ENCODE measurements at regions of chr4 and their contacts with region 1.

Region 1: DNA sequence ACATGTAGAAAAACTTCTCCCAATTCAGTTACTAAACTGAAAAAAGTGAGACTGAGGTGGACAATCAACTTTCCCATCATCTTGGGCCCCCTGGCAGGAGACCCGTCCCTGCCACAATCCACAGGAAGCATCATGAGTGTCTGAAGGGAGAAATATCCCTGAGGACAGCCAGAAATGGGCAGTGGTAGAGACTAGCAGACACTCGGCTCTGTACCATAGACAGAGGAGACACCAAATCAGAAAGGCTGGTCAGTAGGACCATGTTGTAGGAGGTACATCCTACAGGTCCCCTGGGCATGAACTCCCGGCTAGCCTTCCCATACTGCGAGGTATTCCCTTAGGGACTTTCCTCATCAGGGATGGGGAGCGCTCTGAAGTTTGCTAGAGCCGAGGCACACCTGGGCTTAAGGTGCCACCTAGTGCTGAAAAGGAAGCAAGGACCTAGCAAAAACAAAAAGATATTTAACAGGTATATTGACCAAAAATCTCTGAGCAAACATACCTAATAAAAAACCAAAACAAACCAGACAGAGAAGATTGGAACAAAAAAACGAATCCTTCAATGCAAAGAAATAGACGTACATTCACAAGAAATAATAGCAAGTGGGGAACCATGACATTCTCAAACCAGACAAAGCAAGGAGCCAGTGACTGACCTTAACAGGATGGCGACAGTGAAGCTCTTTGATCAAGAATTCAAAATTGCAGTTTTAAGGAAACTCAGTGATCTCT is 55.6 kb downstream of the HAUS3 start:
- DNase-seq: peak; percentile 43 to 47
- H3K4me3 ChIP-seq: no peak overlapping the region
- H3K27ac ChIP-seq: no peak overlapping the region
- H3K4me1 ChIP-seq: no peaks in the 10 kb centered on the region
- H3K27me3 ChIP-seq: no peaks in the 10 kb centered on the region
- CTCF ChIP-seq: peak; percentile 85

Region 2: GRCh38 chr4:1748465-1748995 is 437.8 kb before region 1 on chr4:
- CTCF ChIA-PET with region 1: no interaction called
- POLR2A ChIA-PET with region 1: no interaction called
- intact Hi-C with region 1: loop called (anchors 1 kb)
- DNase-seq: peak in 1 of 2 experiments; percentile 84
- H3K4me3 ChIP-seq: no peak overlapping the region
- H3K27ac ChIP-seq: no peak overlapping the region
- H3K4me1 ChIP-seq: no peaks in the 10 kb centered on the region
- H3K27me3 ChIP-seq: no peaks in the 10 kb centered on the region
- CTCF ChIP-seq: peak; percentile 93

Region 3: DNA sequence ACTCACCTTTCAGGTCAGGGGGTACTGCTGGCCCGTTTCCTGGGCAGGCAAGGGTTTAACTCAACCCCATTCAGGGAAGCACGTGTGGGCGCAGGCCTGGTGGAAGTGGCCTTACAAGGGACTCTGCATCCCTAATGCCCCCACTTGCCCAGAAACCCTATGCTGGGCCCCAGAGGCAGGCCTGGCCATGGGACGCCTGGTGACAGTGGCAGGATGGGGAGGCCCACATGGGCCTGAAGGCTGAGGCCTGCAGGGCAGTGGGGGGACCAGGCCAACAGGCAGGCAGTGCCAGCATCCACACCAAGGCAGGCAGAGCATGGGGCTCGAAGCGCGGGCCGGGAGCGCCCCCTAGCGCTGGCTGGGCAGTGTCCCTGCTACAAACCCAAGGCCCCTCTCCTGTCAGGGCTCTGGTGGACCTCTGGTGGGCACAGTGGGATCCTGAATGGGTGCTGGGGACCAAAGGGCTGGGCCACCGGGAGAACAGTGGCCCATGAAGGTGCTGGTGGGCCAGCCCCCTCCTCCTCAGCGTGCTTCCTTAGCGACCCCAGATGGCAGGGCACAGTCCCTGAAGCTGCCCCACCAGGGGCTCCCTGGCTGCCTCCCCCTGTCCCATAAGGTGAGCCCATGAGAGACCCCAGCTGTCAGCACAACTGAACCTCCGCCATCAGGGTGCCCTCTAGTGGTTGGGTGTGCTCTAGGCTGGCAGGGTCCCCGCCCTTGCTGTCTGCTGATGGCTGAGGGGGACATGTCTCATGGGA is 376.4 kb before region 1 on chr4:
- CTCF ChIA-PET with region 1: no interaction called
- POLR2A ChIA-PET with region 1: no interaction called
- intact Hi-C with region 1: loop called (anchors 5 kb)
- DNase-seq: peak; percentile 57 to 84
- H3K4me3 ChIP-seq: no peak overlapping the region
- H3K27ac ChIP-seq: no peak overlapping the region
- H3K4me1 ChIP-seq: no peaks in the 10 kb centered on the region
- H3K27me3 ChIP-seq: no peaks in the 10 kb centered on the region
- CTCF ChIP-seq: peak; percentile 96

Region 4: DNA sequence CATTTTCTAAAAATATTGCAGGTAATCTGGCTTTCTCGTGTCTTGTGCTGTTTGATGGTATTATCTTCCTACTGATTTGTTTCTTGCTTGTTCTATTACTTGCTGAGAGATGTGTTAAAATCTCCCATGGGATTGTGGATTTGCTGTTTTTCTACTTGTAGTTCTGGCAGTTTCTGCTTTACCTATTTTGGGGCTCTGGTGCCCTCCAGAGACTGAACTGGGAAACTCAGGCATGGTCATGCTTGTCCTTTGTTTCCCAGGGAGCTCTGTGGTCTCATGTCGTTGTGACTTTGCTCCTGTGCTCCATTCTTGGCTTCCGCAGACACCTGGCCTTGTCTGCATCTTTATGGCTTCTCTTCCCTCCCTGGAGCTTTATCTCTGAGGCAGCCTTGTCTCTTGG is 275.7 kb before region 1 on chr4:
- CTCF ChIA-PET with region 1: no interaction called
- POLR2A ChIA-PET with region 1: no interaction called
- intact Hi-C with region 1: loop called (anchors 5 kb)
- DNase-seq: peak in 1 of 2 experiments; percentile 32
- H3K4me3 ChIP-seq: no peak overlapping the region
- H3K27ac ChIP-seq: no peak overlapping the region
- H3K4me1 ChIP-seq: no peaks in the 10 kb centered on the region
- H3K27me3 ChIP-seq: no peaks in the 10 kb centered on the region
- CTCF ChIP-seq: peak; percentile 68

Region 5: GRCh38 chr4:1981251-1982058 is 204.8 kb before region 1 on chr4:
- CTCF ChIA-PET with region 1: no interaction called
- POLR2A ChIA-PET with region 1: no interaction called
- intact Hi-C with region 1: loop called (anchors 5 kb)
- DNase-seq: peak in 1 of 2 experiments; percentile 32
- H3K4me3 ChIP-seq: no peak overlapping the region
- H3K27ac ChIP-seq: no peak overlapping the region
- H3K4me1 ChIP-seq: no peaks in the 10 kb centered on the region
- H3K27me3 ChIP-seq: no peaks in the 10 kb centered on the region
- CTCF ChIP-seq: no peak

Region 6: GRCh38 chr4:2008875-2009703 is 177.2 kb before region 1 on chr4 and contains the start of gene NELFA:
- CTCF ChIA-PET with region 1: no interaction called
- POLR2A ChIA-PET with region 1: no interaction called
- intact Hi-C with region 1: loop called (anchors 1 kb)
- DNase-seq: peak; percentile 91 to 93
- H3K4me3 ChIP-seq: peak within 1 kb of the TSS; percentile 100
- H3K27ac ChIP-seq: peak within 1 kb of the TSS; percentile 97
- H3K4me1 ChIP-seq: peaks cover 17% of the 10 kb centered on the region
- H3K27me3 ChIP-seq: no peaks in the 10 kb centered on the region
- CTCF ChIP-seq: peak; percentile 71
- total RNA-seq, gene NELFA: 52.4 and 70.1 TPM in 2 replicates